RWPE1 (cell line): ENCODE measurements at regions of chr3 and their contacts with region 1.

Region 1: GRCh38 chr3:146326670-146327543 is 76.0 kb upstream of the PLSCR4 start:
- DNase-seq: peak; percentile 29
- H3K27ac ChIP-seq: no peak overlapping the region
- CTCF ChIP-seq: peak; percentile 62

Region 2: DNA sequence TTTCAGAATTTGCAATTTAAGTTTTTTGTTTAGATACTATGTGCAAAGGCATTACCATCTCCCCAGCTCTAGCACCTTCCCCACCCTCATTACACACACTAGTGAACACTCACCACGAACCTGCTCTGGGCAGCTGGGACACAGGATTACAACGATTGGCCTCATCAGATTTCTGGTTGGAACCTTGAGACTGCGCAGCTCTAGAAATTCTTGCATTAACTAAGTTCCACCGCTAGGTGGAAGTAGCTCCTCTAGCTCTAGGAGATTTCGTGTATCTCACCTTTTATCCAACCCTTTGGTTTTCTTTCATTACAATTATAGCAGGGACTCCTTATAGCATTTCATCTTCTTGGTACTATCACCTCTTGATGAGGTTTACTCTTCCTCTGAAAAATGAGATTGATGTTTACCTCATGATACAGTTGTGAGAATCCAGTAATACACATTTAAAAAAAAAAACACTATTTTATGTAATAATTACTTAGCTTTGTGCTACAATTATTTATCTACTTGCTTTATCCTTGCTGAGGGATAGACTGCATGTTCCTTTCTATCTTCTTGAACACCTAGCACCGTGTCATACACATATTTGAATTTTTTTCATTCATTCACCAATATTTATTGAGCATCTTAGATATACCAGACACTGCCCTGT is 137.3 kb before region 1 on chr3:
- CTCF ChIA-PET with region 1: interaction called, 15 read pairs
- POLR2A ChIA-PET with region 1: no interaction called
- DNase-seq: peak; percentile 63
- H3K27ac ChIP-seq: no peak overlapping the region
- CTCF ChIP-seq: peak; percentile 80

Region 3: DNA sequence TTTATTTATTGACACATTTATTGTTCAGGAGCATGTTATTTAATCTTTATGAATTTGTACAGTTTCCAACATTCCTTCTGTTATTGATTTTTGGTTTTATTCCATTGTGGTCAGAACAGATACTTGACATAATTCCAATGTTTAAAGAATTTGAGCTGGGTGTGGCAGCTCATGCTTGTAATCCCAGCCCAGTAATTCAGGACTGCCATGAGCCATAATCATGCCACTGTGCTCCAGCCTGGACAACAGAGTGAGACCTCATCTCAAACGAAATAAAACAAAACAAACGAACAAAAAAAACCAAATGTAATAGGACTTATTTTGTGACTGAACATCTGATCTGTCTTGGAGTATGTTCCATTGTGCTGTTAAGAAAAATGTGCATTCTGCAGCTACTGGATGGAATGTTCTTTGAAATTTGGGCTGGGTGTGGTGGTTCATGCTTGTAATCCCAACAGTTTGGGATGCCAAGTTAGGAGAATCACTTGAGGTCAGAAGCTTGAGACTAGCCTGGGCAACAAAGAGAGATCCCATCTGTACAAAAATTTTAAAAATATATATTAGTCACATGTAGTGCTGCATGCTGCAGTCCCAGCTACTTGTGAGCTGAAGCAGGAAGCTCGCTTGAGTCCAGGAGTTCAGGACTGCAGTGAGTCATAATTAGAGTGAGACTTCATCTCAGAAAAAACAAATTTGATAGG is 13.3 kb before region 1 on chr3:
- CTCF ChIA-PET with region 1: no interaction called
- POLR2A ChIA-PET with region 1: no interaction called
- DNase-seq: no peak
- H3K27ac ChIP-seq: no peak overlapping the region
- CTCF ChIP-seq: no peak